ENCODE measurements at regions of chr9 and their contacts with region 1.

Region 1: GRCh38 chr9:81351167-81351566 is 338.2 kb downstream of the TLE1 start:
- DNase-seq: no peak
- H3K4me3 ChIP-seq: no peak overlapping the region
- H3K27me3 ChIP-seq: no peaks in the 10 kb centered on the region
- CTCF ChIP-seq: no peak

Region 2: DNA sequence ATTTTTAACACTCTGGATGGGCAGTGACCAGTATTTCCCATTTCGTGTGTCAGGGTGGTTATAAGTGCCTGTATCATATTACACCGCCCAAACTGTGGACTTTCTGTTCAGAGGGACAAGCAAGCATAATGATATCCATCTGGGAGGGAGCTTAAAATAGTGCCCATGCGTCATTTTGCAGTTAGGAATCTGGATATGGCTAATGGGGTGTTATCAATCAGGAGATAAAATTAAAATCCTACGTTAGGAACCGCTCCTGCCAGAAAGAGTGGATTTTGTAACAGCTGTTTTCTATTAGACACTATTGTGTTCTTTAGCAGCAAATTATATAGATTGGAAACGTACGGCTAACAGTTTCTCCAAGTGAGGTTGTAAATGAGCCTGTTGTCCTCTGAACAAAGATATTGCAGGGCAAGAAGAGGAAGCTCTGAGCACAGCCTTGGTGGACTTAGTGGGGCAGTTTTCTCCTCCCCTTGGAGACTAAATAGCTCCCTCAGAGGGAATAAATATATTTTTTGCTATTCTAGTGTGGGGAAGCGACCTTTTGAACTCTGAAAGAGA is 797.8 kb after region 1 on chr9:
- CTCF ChIA-PET with region 1: no interaction called
- POLR2A ChIA-PET with region 1: interaction called, 13 read pairs
- DNase-seq: peak; percentile 82
- H3K4me3 ChIP-seq: no peak overlapping the region
- H3K27me3 ChIP-seq: no peaks in the 10 kb centered on the region; the same call in 1 of the 2 replicates
- CTCF ChIP-seq: no peak

Measured in BJ (cell line).